CD4-positive, alpha-beta T cell (primary cell): ENCODE measurements at regions of chr13 and their contacts with region 1.

Region 1: GRCh38 chr13:49495783-49496762 is at the start of gene PHF11:
- DNase-seq: peak; percentile 76 to 95 (median 84)
- ATAC-seq: peak; percentile 77
- H3K4me3 ChIP-seq: peak within 1 kb of the TSS; percentile 82
- H3K4me3 Mint-ChIP-seq: peak within 1 kb of the TSS; percentile 99
- H3K27ac ChIP-seq: peak within 1 kb of the TSS; percentile 88 to 94
- H3K27ac Mint-ChIP-seq: peak within 1 kb of the TSS; percentile 95
- H3K4me1 ChIP-seq: peaks cover 49% of the 10 kb centered on the region
- H3K4me1 Mint-ChIP-seq: peaks cover 63% of the 10 kb centered on the region
- H3K27me3 ChIP-seq: no peaks in the 10 kb centered on the region
- H3K27me3 Mint-ChIP-seq: no peaks in the 10 kb centered on the region
- CTCF ChIP-seq: no peak
- total RNA-seq, gene PHF11: 105 TPM

Region 2: DNA sequence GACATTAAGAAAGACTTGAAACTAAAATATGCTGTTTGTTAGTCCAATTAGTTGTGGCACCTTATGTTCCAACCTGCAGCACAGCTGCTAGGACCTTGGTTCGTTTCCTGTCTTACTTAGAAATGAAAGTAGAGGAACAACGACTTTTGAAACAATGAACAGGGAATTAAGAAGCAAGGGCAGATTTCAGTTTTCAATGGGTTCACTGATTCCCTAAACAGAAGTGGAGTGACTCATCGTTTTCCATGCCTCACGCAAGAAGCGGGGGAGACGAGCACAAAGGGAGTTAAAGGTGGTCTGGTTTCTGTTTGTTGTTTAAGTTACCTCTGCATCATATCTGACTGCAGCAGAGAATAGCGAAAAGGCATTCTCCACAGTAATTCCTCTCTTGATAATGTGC is 44.5 kb after region 1 on chr13:
- CTCF ChIA-PET with region 1: no interaction called
- POLR2A ChIA-PET with region 1: interaction called, 23 read pairs
- intact Hi-C with region 1: loop called in 1 of 2 experiments (anchors 5 kb)
- DNase-seq: peak in 5 of 14 experiments; percentile 7 to 32 (median 25)
- ATAC-seq: peak; percentile 66
- H3K4me3 ChIP-seq: peak overlapping the region; percentile 44
- H3K4me3 Mint-ChIP-seq: peak overlapping the region; percentile 86
- H3K27ac ChIP-seq: peak overlapping the region in 1 of 2 donors; percentile 30
- H3K27ac Mint-ChIP-seq: peak overlapping the region; percentile 93
- H3K4me1 ChIP-seq: peaks cover 9% of the 10 kb centered on the region
- H3K4me1 Mint-ChIP-seq: peaks cover 22% of the 10 kb centered on the region
- H3K27me3 ChIP-seq: no peaks in the 10 kb centered on the region
- H3K27me3 Mint-ChIP-seq: no peaks in the 10 kb centered on the region
- CTCF ChIP-seq: no peak

Region 3: GRCh38 chr13:49585220-49586157 is 89.4 kb after region 1 on chr13 and contains the start of gene RCBTB1:
- CTCF ChIA-PET with region 1: no interaction called
- POLR2A ChIA-PET with region 1: interaction called, 13 read pairs
- intact Hi-C with region 1: loop called (anchors 2 to 10 kb)
- DNase-seq: peak; percentile 44 to 89 (median 62)
- ATAC-seq: peak; percentile 94
- H3K4me3 ChIP-seq: peak within 1 kb of the TSS; percentile 90
- H3K4me3 Mint-ChIP-seq: peak within 1 kb of the TSS; percentile 96
- H3K27ac ChIP-seq: peak within 1 kb of the TSS; percentile 59 to 74
- H3K27ac Mint-ChIP-seq: peak within 1 kb of the TSS; percentile 75
- H3K4me1 ChIP-seq: peaks cover 14% of the 10 kb centered on the region
- H3K4me1 Mint-ChIP-seq: peaks cover 40% of the 10 kb centered on the region
- H3K27me3 ChIP-seq: no peaks in the 10 kb centered on the region
- H3K27me3 Mint-ChIP-seq: no peaks in the 10 kb centered on the region
- CTCF ChIP-seq: no peak
- total RNA-seq, gene RCBTB1: 10.3 to 11.4 TPM

Region 4: GRCh38 chr13:49606747-49607648 is 110.9 kb after region 1 on chr13:
- CTCF ChIA-PET with region 1: no interaction called
- POLR2A ChIA-PET with region 1: no interaction called
- intact Hi-C with region 1: loop called in 1 of 2 experiments (anchors 2 kb)
- DNase-seq: peak; percentile 66 to 88 (median 76)
- ATAC-seq: peak; percentile 99
- H3K4me3 ChIP-seq: peak overlapping the region; percentile 24
- H3K4me3 Mint-ChIP-seq: peak overlapping the region; percentile 86
- H3K27ac ChIP-seq: no peak overlapping the region
- H3K27ac Mint-ChIP-seq: no peak overlapping the region
- H3K4me1 ChIP-seq: peaks cover 9% of the 10 kb centered on the region
- H3K4me1 Mint-ChIP-seq: peaks cover 5% of the 10 kb centered on the region
- H3K27me3 ChIP-seq: no peaks in the 10 kb centered on the region
- H3K27me3 Mint-ChIP-seq: no peaks in the 10 kb centered on the region
- CTCF ChIP-seq: peak; percentile 82